ENCODE measurements at regions of chr17 and their contacts with region 1.

Region 1: DNA sequence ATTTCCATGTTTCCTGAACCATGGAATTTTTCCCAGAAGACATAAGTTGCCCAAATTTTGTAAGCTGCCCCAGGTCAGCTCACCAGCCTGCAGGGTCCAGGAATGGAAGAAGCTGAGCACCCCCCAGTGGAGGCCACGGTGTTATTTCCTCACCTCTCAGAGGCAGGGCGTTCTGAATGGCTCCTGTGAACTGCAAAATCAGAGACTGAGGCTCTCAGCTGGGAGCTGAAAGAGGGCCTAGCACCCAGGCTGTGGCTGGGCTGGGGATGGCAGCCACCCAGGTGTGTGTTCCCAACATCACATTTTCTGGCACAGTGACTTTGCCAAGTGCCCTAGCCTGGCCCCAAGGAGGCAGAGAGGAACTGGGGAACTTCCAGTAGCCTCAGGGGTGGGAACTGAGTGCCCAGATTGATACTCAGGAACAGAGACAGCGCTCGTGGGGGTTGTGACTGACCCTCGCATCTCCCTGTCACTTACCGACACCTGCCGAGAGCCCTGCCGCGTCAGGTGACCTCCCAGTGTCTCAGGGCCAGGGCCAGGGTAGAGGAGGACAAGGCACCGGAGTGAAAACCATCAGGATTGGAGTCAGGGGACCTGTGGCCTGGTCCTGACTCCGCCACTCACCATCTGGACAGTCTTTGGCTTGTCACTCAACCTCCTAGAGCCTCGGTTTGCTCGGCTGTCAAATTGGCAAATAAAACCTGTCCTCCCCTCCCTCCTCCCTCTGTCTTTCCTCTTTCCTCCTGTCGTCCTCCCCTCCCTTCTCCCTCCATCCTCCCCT is 11.3 kb downstream of the CACNG4 start:
- DNase-seq: peak in 1 of 2 experiments; percentile 69
- H3K4me3 ChIP-seq: no peak overlapping the region
- H3K27ac ChIP-seq: no peak overlapping the region
- H3K4me1 ChIP-seq: peaks cover 0 to 2% (median 1%) of the 10 kb centered on the region in 4 experiments; a peak in 2 of 7 replicates
- H3K27me3 ChIP-seq: no peaks in the 10 kb centered on the region
- CTCF ChIP-seq: peak; percentile 49 to 75 (median 67)
- EP300 ChIP-seq: no peak
- POLR2A ChIP-seq: no peak
- RAD21 ChIP-seq: peak; percentile 83 to 91

Region 2: GRCh38 chr17:66957951-66958579 is 17.7 kb before region 1 on chr17:
- CTCF ChIA-PET with region 1: interaction called, 10 read pairs
- POLR2A ChIA-PET with region 1: interaction called, 3 read pairs
- DNase-seq: no peak
- H3K4me3 ChIP-seq: no peak overlapping the region
- H3K27ac ChIP-seq: no peak overlapping the region
- H3K4me1 ChIP-seq: peaks cover 0 to 7% (median under 1%) of the 10 kb centered on the region in 4 experiments; a peak in 4 of 7 replicates
- H3K27me3 ChIP-seq: peaks cover 0 to 10% (median 5%) of the 10 kb centered on the region in 4 experiments; a peak in 4 of 7 replicates
- CTCF ChIP-seq: no peak
- EP300 ChIP-seq: no peak
- POLR2A ChIP-seq: no peak
- RAD21 ChIP-seq: no peak

Region 3: DNA sequence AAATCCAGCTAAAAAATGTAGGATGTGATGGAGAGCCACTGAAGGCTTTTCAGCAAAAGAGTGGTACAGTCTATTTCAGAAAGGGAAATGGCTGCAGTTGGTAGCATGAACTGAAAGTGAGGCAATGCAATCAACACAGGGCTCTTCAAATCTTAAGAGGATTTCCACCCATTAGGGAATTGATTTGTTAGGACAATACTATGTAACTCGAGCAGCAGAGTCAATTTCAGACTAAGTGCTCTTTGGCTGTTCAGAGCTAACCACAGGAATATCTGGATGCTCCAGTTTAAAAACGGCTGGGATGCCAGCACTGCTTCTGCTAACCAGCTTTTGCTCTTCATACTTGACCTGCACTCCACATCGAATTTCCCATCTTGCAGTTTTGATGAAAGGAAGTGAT is 93.2 kb after region 1 on chr17:
- CTCF ChIA-PET with region 1: no interaction called
- POLR2A ChIA-PET with region 1: no interaction called
- DNase-seq: no peak
- H3K4me3 ChIP-seq: no peak overlapping the region
- H3K27ac ChIP-seq: no peak overlapping the region
- H3K4me1 ChIP-seq: no peaks in the 10 kb centered on the region; a peak in 1 of 7 replicates
- H3K27me3 ChIP-seq: no peaks in the 10 kb centered on the region
- CTCF ChIP-seq: no peak
- EP300 ChIP-seq: no peak
- POLR2A ChIP-seq: no peak
- RAD21 ChIP-seq: no peak